Activated naive CD4-positive, alpha-beta T cell treated with anti-CD3 and anti-CD28 coated beads for 36 hours (primary cell): ENCODE measurements at regions of chr14 and their contacts with region 1.

Region 1: GRCh38 chr14:34982417-34983147 is at the start of gene SRP54:
- DNase-seq: peak; percentile 100
- H3K4me3 Mint-ChIP-seq: no peak within 1 kb of the TSS
- H3K27ac Mint-ChIP-seq: no peak within 1 kb of the TSS
- H3K4me1 Mint-ChIP-seq: peaks cover 38% of the 10 kb centered on the region
- H3K27me3 Mint-ChIP-seq: no peaks in the 10 kb centered on the region
- total RNA-seq, gene SRP54: 66.5 to 72.6 TPM

Region 2: GRCh38 chr14:34671716-34672115 is 310.9 kb before region 1 on chr14:
- CTCF ChIA-PET with region 1: interaction called, 3 read pairs
- intact Hi-C with region 1: loop called (anchors 2 kb)
- DNase-seq: no peak
- H3K4me3 Mint-ChIP-seq: no peak overlapping the region
- H3K27ac Mint-ChIP-seq: no peak overlapping the region
- H3K4me1 Mint-ChIP-seq: no peaks in the 10 kb centered on the region
- H3K27me3 Mint-ChIP-seq: no peaks in the 10 kb centered on the region

Region 3: GRCh38 chr14:34699873-34700621 is 282.5 kb before region 1 on chr14:
- CTCF ChIA-PET with region 1: no interaction called
- intact Hi-C with region 1: no loop called
- DNase-seq: no peak
- H3K4me3 Mint-ChIP-seq: no peak overlapping the region
- H3K27ac Mint-ChIP-seq: no peak overlapping the region
- H3K4me1 Mint-ChIP-seq: peaks cover 2% of the 10 kb centered on the region
- H3K27me3 Mint-ChIP-seq: no peaks in the 10 kb centered on the region

Region 4: GRCh38 chr14:34931206-34931605 is 51.4 kb before region 1 on chr14:
- CTCF ChIA-PET with region 1: interaction called, 6 read pairs
- intact Hi-C with region 1: loop called (anchors 1 kb)
- DNase-seq: peak; percentile 56
- H3K4me3 Mint-ChIP-seq: peak overlapping the region; percentile 64
- H3K27ac Mint-ChIP-seq: peak overlapping the region; percentile 93
- H3K4me1 Mint-ChIP-seq: peaks cover 49% of the 10 kb centered on the region
- H3K27me3 Mint-ChIP-seq: no peaks in the 10 kb centered on the region

Region 5: DNA sequence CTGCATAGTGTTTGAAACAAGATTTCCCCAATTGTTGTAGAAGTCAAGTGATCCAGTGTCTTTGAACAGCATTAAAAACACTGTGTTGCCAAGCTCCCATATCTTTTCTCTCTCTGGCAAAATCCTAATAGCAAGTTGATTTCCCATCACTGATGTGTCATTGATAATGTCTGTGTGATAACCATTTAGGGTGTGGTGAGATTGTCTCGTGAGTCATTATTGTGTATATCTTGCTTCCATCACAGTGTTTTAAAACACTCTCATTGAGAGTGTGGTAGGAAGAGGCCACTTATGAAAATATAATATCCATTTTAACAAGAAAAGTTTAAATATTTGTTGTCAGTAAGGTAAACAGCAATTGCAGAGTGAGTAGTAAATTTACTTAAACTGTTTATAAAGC is 214.4 kb after region 1 on chr14:
- CTCF ChIA-PET with region 1: no interaction called
- intact Hi-C with region 1: loop called (anchors 5 kb)
- DNase-seq: no peak
- H3K4me3 Mint-ChIP-seq: no peak overlapping the region
- H3K27ac Mint-ChIP-seq: no peak overlapping the region
- H3K4me1 Mint-ChIP-seq: peaks cover 30% of the 10 kb centered on the region
- H3K27me3 Mint-ChIP-seq: no peaks in the 10 kb centered on the region

Region 6: GRCh38 chr14:35331605-35332516 is 349.3 kb after region 1 on chr14:
- CTCF ChIA-PET with region 1: no interaction called
- intact Hi-C with region 1: loop called (anchors 1 kb)
- DNase-seq: no peak
- H3K4me3 Mint-ChIP-seq: no peak overlapping the region
- H3K27ac Mint-ChIP-seq: peak overlapping the region; percentile 94
- H3K4me1 Mint-ChIP-seq: peaks cover 32% of the 10 kb centered on the region
- H3K27me3 Mint-ChIP-seq: no peaks in the 10 kb centered on the region